ENCODE measurements at regions of chr4 and their contacts with region 1.

Region 1: GRCh38 chr4:55948726-55949474 is at the start of gene CEP135:
- DNase-seq: peak; percentile 75
- ATAC-seq: peak; percentile 81
- H3K4me3 ChIP-seq: peak within 1 kb of the TSS; percentile 76
- H3K27ac ChIP-seq: peak within 1 kb of the TSS; percentile 95
- H3K4me1 ChIP-seq: no peaks in the 10 kb centered on the region
- H3K27me3 ChIP-seq: no peaks in the 10 kb centered on the region
- CTCF ChIP-seq: peak; percentile 88 to 99 (median 93); a peak in 5 of 6 replicates
- EP300 ChIP-seq: peak; percentile 21 to 45; a peak in 1 of 4 replicates
- POLR2A ChIP-seq: peak; percentile 88
- RAD21 ChIP-seq: peak; percentile 78
- polyA plus RNA-seq, gene CEP135: 2.9 to 4.5 TPM

Region 2: GRCh38 chr4:55866973-55867574 is 81.8 kb before region 1 on chr4:
- CTCF ChIA-PET with region 1: interaction called, 27 read pairs
- POLR2A ChIA-PET with region 1: no interaction called
- RAD21 ChIA-PET with region 1: interaction called, 12 read pairs
- SMC1A ChIA-PET with region 1: interaction called, 9 read pairs
- in situ Hi-C with region 1: no loop called
- intact Hi-C with region 1: no loop called
- DNase-seq: peak; percentile 38
- ATAC-seq: peak; percentile 98
- H3K4me3 ChIP-seq: no peak overlapping the region
- H3K27ac ChIP-seq: peak overlapping the region; percentile 31; the same call in 1 of the 2 replicates
- H3K4me1 ChIP-seq: peaks cover 7% of the 10 kb centered on the region; the same call in 1 of the 2 replicates
- H3K27me3 ChIP-seq: no peaks in the 10 kb centered on the region
- CTCF ChIP-seq: peak; percentile 70 to 77 (median 77); a peak in 5 of 6 replicates
- EP300 ChIP-seq: no peak
- POLR2A ChIP-seq: no peak
- RAD21 ChIP-seq: peak; percentile 80

Region 3: DNA sequence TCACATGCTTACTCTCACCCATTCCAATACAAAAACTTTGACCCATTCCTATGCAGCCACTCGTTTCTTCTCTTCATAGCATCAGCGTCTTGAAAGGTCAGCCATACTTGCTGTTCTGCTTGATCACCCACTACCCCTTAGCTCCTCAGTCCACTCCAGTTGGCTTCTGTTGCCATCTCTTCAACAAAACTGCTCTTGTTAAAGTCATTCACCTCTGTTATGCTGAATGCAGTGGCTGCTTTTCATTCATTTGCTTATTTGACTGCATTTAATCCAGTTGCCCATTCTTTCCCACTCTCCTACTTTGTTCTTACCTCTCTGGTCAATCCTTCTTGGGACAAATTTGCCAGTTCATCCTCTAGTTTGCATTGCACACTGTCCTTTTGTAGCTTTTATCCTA is 24.8 kb after region 1 on chr4:
- CTCF ChIA-PET with region 1: interaction called, 14 read pairs
- POLR2A ChIA-PET with region 1: interaction called, 4 read pairs
- RAD21 ChIA-PET with region 1: interaction called, 7 read pairs
- SMC1A ChIA-PET with region 1: interaction called, 5 read pairs
- in situ Hi-C with region 1: no loop called
- intact Hi-C with region 1: no loop called
- DNase-seq: no peak
- ATAC-seq: no peak
- H3K4me3 ChIP-seq: no peak overlapping the region
- H3K27ac ChIP-seq: no peak overlapping the region
- H3K4me1 ChIP-seq: no peaks in the 10 kb centered on the region
- H3K27me3 ChIP-seq: no peaks in the 10 kb centered on the region
- CTCF ChIP-seq: no peak
- EP300 ChIP-seq: no peak
- POLR2A ChIP-seq: no peak
- RAD21 ChIP-seq: no peak

Region 4: DNA sequence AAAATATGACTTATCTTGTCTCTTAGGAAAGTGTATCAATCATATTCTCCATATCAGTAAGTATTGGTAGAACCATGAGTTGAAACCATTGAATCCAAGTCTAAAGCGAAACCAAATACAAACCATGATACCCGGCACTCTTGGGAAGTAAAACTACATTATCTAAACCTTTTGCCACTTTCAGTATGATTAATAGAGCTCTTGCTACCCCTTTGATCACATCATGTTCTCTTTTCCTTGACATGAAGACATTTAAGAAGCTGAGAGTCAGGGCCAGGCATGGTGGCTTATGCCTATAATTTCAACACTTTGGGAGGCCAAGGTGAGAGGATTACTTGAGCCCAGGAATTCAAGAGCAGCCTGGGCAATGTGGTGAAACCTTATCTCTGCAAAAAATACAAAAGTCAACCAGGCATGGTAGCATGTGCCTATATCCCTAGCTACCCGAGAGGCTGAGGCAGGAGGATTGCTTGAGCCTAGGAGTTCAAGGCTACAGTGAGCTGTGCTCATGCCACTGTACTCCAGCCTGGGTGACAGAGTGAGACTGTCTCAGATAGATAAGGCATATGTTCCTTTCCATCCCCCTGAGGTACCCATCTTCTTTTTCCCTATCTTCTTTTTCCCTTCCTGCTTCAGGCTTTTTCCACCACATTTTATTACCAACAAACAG is 45.2 kb after region 1 on chr4:
- CTCF ChIA-PET with region 1: interaction called, 10 read pairs
- POLR2A ChIA-PET with region 1: interaction called, 3 read pairs
- RAD21 ChIA-PET with region 1: interaction called, 72 read pairs
- SMC1A ChIA-PET with region 1: interaction called, 21 read pairs
- in situ Hi-C with region 1: no loop called
- intact Hi-C with region 1: loop called (anchors 5 kb)
- DNase-seq: peak; percentile 31
- ATAC-seq: peak; percentile 88
- H3K4me3 ChIP-seq: no peak overlapping the region
- H3K27ac ChIP-seq: peak overlapping the region; percentile 9; the same call in 1 of the 2 replicates
- H3K4me1 ChIP-seq: peaks cover 10% of the 10 kb centered on the region
- H3K27me3 ChIP-seq: no peaks in the 10 kb centered on the region
- CTCF ChIP-seq: no peak
- EP300 ChIP-seq: no peak
- POLR2A ChIP-seq: no peak
- RAD21 ChIP-seq: 0 out of 2 replicates have a peak, but pooled peaks have one; percentile 0

Region 5: GRCh38 chr4:56048702-56049431 is 100.0 kb after region 1 on chr4:
- CTCF ChIA-PET with region 1: interaction called, 18 read pairs
- POLR2A ChIA-PET with region 1: interaction called, 4 read pairs
- RAD21 ChIA-PET with region 1: interaction called, 28 read pairs
- SMC1A ChIA-PET with region 1: interaction called, 18 read pairs
- in situ Hi-C with region 1: loop called (anchors 5 kb)
- intact Hi-C with region 1: loop called (anchors 1 kb)
- DNase-seq: peak; percentile 2
- ATAC-seq: peak; percentile 97
- H3K4me3 ChIP-seq: peak overlapping the region; percentile 84
- H3K27ac ChIP-seq: no peak overlapping the region
- H3K4me1 ChIP-seq: peaks cover 9% of the 10 kb centered on the region; the same call in 1 of the 2 replicates
- H3K27me3 ChIP-seq: peaks cover 0 to 8% of the 10 kb centered on the region in 2 experiments; a peak in 2 of 4 replicates
- CTCF ChIP-seq: peak; percentile 17 to 70 (median 60); a peak in 3 of 6 replicates
- EP300 ChIP-seq: no peak
- POLR2A ChIP-seq: peak; percentile 57; the same call in 1 of the 2 replicates
- RAD21 ChIP-seq: peak; percentile 52

Region 6: GRCh38 chr4:56301181-56302076 is 352.5 kb after region 1 on chr4:
- CTCF ChIA-PET with region 1: interaction called, 49 read pairs
- POLR2A ChIA-PET with region 1: interaction called, 4 read pairs
- RAD21 ChIA-PET with region 1: interaction called, 6 read pairs
- SMC1A ChIA-PET with region 1: interaction called, 18 read pairs
- in situ Hi-C with region 1: loop called (anchors 10 kb)
- intact Hi-C with region 1: loop called (anchors 1 kb)
- DNase-seq: peak; percentile 43
- ATAC-seq: peak; percentile 99
- H3K4me3 ChIP-seq: no peak overlapping the region
- H3K27ac ChIP-seq: no peak overlapping the region
- H3K4me1 ChIP-seq: no peaks in the 10 kb centered on the region
- H3K27me3 ChIP-seq: no peaks in the 10 kb centered on the region
- CTCF ChIP-seq: peak; percentile 90 to 97 (median 90)
- EP300 ChIP-seq: no peak
- POLR2A ChIP-seq: no peak
- RAD21 ChIP-seq: peak; percentile 99

Region 7: DNA sequence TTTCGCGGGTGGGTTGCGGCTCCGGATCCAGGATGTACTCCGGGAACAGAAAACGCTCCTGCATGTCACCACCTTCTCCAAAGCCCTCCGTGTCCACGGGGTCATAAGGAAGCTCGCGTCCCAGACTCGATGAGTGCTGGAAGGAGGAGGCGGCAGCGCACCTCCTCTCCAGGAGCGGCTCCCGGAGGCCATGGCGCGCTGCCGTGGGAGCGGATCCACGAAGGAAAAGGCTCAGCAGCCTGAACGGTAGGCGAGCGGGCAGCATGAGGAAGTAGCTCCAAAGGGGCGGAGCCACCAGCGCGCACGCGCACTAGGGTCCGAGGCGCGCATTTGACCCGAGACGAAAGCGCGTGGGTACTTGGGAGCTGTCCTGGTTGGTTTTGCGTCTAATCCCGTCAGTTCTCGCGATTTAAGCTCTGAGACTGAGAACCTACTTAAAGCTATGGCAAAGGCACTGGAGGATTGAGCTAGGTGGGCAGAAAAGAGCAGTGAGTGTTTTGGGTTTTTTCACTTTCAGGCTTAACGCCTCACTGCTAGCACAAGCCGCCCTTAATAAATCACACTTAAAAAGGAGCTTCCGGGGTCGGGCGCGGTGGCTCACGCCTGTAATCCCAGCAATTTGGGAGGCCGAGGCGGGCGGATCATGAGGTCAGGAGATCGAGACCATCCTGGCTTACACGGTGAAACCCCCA is 1028.6 kb after region 1 on chr4 and contains the start of gene NOA1:
- CTCF ChIA-PET with region 1: no interaction called
- POLR2A ChIA-PET with region 1: no interaction called
- RAD21 ChIA-PET with region 1: interaction called, 4 read pairs
- SMC1A ChIA-PET with region 1: no interaction called
- in situ Hi-C with region 1: no loop called
- intact Hi-C with region 1: loop called (anchors 5 kb)
- DNase-seq: peak; percentile 99
- ATAC-seq: peak; percentile 87
- H3K4me3 ChIP-seq: peak within 1 kb of the TSS; percentile 92
- H3K27ac ChIP-seq: peak within 1 kb of the TSS; percentile 92
- H3K4me1 ChIP-seq: peaks cover 4% of the 10 kb centered on the region
- H3K27me3 ChIP-seq: no peaks in the 10 kb centered on the region
- CTCF ChIP-seq: no peak
- EP300 ChIP-seq: 0 out of 4 replicates have a peak, but pooled peaks of 1 of the 2 experiments have one; percentile 15
- POLR2A ChIP-seq: peak; percentile 88
- RAD21 ChIP-seq: no peak
- polyA plus RNA-seq, gene NOA1: 3.2 to 8.3 TPM

Measured in GM12878 (cell line).